ENCODE measurements at regions of chr3 and their contacts with region 1.

Region 1: DNA sequence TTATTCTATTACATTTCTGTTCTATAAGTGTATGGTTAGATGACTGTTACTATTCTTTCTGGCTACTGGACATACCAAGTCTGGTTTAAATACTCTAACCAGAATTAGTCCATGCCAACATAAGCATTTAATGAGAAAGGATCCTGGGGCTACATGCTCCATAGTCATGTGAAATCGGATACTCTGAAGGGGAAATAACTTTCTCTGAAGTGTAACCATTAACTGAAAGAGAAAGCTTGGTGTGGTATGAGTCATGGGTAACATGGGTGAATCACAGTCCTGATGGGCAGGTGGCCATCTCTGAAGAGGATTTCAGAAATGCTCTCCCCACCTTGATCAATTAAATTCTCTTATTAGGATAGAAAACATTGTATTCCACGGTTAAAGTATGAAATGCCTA is 69.4 kb downstream of the FHIT start:
- DNase-seq: no peak
- H3K4me3 ChIP-seq: no peak overlapping the region
- CTCF ChIP-seq: no peak
- POLR2A ChIP-seq: no peak

Region 2: GRCh38 chr3:59998058-59998457 is 1183.8 kb before region 1 on chr3:
- intact Hi-C with region 1: loop called (anchors 10 kb)
- DNase-seq: no peak
- H3K4me3 ChIP-seq: no peak overlapping the region
- CTCF ChIP-seq: no peak
- POLR2A ChIP-seq: no peak

Region 3: GRCh38 chr3:61154457-61155198 is 27.2 kb before region 1 on chr3:
- intact Hi-C with region 1: no loop called
- DNase-seq: no peak
- H3K4me3 ChIP-seq: no peak overlapping the region
- CTCF ChIP-seq: no peak
- POLR2A ChIP-seq: no peak